ENCODE measurements at regions of chr14 and their contacts with region 1.

Region 1: GRCh38 chr14:20652996-20653975 is 11.8 kb upstream of the OR6S1 start:
- DNase-seq: peak; percentile 91
- ATAC-seq: peak; percentile 63
- H3K4me3 ChIP-seq: peak overlapping the region; percentile 38 to 42
- H3K27ac ChIP-seq: no peak overlapping the region
- H3K4me1 ChIP-seq: peaks cover 6 to 29% of the 10 kb centered on the region in 2 experiments
- H3K27me3 ChIP-seq: no peaks in the 10 kb centered on the region
- CTCF ChIP-seq: no peak
- POLR2A ChIP-seq: no peak
- RAD21 ChIP-seq: no peak

Region 2: GRCh38 chr14:20167091-20167490 is 486.2 kb before region 1 on chr14:
- CTCF ChIA-PET with region 1: no interaction called
- POLR2A ChIA-PET with region 1: no interaction called
- RAD21 ChIA-PET with region 1: no interaction called
- intact Hi-C with region 1: no loop called
- DNase-seq: no peak
- ATAC-seq: no peak
- H3K4me3 ChIP-seq: no peak overlapping the region
- H3K27ac ChIP-seq: no peak overlapping the region
- H3K4me1 ChIP-seq: no peaks in the 10 kb centered on the region
- H3K27me3 ChIP-seq: no peaks in the 10 kb centered on the region
- CTCF ChIP-seq: no peak
- POLR2A ChIP-seq: no peak
- RAD21 ChIP-seq: no peak

Region 3: GRCh38 chr14:20632682-20633428 is 20.4 kb before region 1 on chr14:
- CTCF ChIA-PET with region 1: interaction called, 11 read pairs
- POLR2A ChIA-PET with region 1: interaction called, 3 read pairs
- RAD21 ChIA-PET with region 1: interaction called, 3 to 4 read pairs
- intact Hi-C with region 1: loop called (anchors 1 kb)
- DNase-seq: no peak
- ATAC-seq: peak; percentile 76
- H3K4me3 ChIP-seq: peak overlapping the region; percentile 30 to 42
- H3K27ac ChIP-seq: peak overlapping the region; percentile 30; the same call in 1 of the 2 replicates
- H3K4me1 ChIP-seq: peaks cover 0 to 28% of the 10 kb centered on the region in 2 experiments; a peak in 3 of 4 replicates
- H3K27me3 ChIP-seq: no peaks in the 10 kb centered on the region; the same call in 1 of the 2 replicates
- CTCF ChIP-seq: no peak
- POLR2A ChIP-seq: no peak
- RAD21 ChIP-seq: no peak

Region 4: DNA sequence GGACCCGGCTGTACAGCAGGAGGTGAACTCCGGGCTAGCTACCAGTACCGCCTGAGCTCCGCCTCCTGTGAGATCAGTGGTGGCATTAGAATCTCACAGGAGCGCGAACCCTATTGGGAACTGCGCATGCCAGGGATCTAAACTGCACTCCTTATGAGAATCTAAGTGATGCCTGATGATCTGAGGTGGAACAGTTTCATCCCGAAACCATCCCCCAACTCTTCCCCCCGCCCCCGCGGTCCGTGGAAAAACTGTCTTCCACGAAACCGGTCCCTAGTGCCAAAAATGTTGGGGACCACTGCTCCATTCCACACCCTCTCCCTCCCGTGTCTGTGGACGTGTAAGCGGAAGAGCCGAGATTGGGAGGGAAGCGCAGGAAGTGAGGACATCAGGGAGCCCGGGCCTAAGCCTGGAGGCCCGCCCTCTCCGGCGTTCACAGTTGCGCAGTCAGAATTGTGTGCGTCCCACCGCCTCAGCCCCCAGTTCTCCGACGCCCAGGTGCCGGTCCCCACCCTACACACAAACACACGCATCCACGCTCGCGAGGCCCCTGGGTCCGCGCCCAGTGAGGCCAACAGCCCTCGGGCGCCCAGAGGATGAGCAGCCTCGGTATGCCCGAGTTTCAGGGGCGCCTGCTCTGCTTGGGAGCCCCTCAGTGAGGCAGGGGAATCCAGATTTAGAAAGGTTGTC is 29.3 kb after region 1 on chr14:
- CTCF ChIA-PET with region 1: interaction called, 59 read pairs
- POLR2A ChIA-PET with region 1: interaction called, 39 read pairs
- RAD21 ChIA-PET with region 1: interaction called, 3 read pairs
- intact Hi-C with region 1: loop called (anchors 1 kb)
- DNase-seq: peak; percentile 88
- ATAC-seq: peak; percentile 61
- H3K4me3 ChIP-seq: peak overlapping the region; percentile 65 to 72
- H3K27ac ChIP-seq: peak overlapping the region; percentile 97
- H3K4me1 ChIP-seq: peaks cover 27 to 64% of the 10 kb centered on the region in 2 experiments
- H3K27me3 ChIP-seq: no peaks in the 10 kb centered on the region
- CTCF ChIP-seq: 0 out of 6 replicates have a peak, but pooled peaks of 1 of the 3 experiments have one; percentile 7
- POLR2A ChIP-seq: peak; percentile 13
- RAD21 ChIP-seq: no peak

Region 5: GRCh38 chr14:20690848-20691523 is 37.7 kb after region 1 on chr14:
- CTCF ChIA-PET with region 1: interaction called, 17 read pairs
- POLR2A ChIA-PET with region 1: interaction called, 4 read pairs
- RAD21 ChIA-PET with region 1: interaction called in 1 of 2 experiments, 3 read pairs
- intact Hi-C with region 1: no loop called
- DNase-seq: peak; percentile 60
- ATAC-seq: peak; percentile 93
- H3K4me3 ChIP-seq: no peak overlapping the region
- H3K27ac ChIP-seq: no peak overlapping the region
- H3K4me1 ChIP-seq: peaks cover 0 to 8% of the 10 kb centered on the region in 2 experiments; a peak in 2 of 4 replicates
- H3K27me3 ChIP-seq: no peaks in the 10 kb centered on the region
- CTCF ChIP-seq: peak; percentile 84 to 89 (median 86)
- POLR2A ChIP-seq: no peak
- RAD21 ChIP-seq: peak; percentile 84

Region 6: DNA sequence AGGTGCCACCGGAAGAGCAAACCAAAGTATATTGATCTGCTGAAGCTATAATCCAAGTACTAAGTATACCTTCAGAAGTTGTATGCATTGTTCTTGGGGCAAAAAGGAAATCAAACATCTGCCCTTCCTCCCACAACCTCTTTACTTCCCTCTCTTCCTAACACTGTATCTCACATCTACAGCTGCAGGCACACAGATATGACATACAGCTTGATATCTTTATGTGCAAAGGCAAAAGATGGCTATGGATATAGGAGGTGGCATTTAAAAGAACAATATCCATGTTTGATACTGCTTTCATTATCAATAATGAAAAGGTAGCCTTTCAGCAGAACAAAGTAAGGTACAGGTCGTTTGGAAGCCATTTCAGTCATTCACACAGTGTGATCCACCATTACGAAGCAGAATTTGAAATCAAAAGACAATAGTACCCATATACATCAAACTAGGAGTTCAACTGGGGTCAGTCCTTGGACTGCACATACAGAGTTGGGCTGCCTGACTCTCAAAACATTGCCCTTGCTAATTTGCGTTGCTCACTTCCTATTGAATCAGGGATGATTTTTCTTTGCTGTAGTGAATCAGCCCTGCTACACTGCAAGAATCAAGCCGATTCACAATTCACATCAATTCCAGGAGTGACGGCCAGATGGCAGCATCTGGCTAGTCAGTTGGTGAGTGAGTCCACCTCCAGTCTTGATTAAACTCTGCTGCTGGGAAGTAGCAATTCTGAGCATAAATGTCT is 44.2 kb after region 1 on chr14:
- CTCF ChIA-PET with region 1: interaction called, 13 read pairs
- POLR2A ChIA-PET with region 1: no interaction called
- RAD21 ChIA-PET with region 1: no interaction called
- intact Hi-C with region 1: no loop called
- DNase-seq: peak; percentile 55
- ATAC-seq: peak; percentile 98
- H3K4me3 ChIP-seq: no peak overlapping the region
- H3K27ac ChIP-seq: no peak overlapping the region
- H3K4me1 ChIP-seq: peaks cover 0 to 3% of the 10 kb centered on the region in 2 experiments; a peak in 1 of 4 replicates
- H3K27me3 ChIP-seq: no peaks in the 10 kb centered on the region
- CTCF ChIP-seq: peak; percentile 78 to 85 (median 80)
- POLR2A ChIP-seq: no peak
- RAD21 ChIP-seq: peak; percentile 81